Activated CD4-positive, alpha-beta T cell treated with anti-CD3 and anti-CD28 coated beads for 36 hours (primary cell): ENCODE measurements at regions of chr2 and their contacts with region 1.

Region 1: DNA sequence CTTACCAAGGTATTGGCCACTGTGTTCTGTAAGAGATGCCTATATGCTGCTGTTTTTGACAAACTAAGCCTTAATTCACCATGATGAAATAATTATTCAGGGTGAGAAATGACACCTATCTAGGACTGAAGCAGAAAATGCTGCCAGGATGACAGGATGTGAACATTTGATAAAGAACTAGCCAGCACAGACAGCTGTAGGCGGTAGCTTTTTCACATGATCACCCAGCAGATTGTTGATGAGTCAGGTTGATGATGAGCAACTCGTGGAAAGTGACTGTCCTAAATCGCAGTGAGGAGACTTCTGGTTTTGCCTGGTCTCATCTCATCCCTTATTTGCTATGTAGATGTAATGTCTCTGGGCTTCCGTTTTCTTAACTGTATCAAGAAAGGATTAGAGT is 144.1 kb downstream of the PRPF40A start:
- DNase-seq: peak; percentile 73
- ATAC-seq: peak; percentile 97
- H3K4me3 Mint-ChIP-seq: no peak overlapping the region
- H3K27ac Mint-ChIP-seq: peak overlapping the region; percentile 52
- H3K4me1 Mint-ChIP-seq: peaks cover 8% of the 10 kb centered on the region
- H3K27me3 Mint-ChIP-seq: peaks cover 2% of the 10 kb centered on the region

Region 2: GRCh38 chr2:152407204-152407721 is 165.9 kb before region 1 on chr2:
- CTCF ChIA-PET with region 1: no interaction called
- POLR2A ChIA-PET with region 1: no interaction called
- intact Hi-C with region 1: loop called in 1 of 2 experiments (anchors 5 kb)
- DNase-seq: peak; percentile 59
- ATAC-seq: peak; percentile 80
- H3K4me3 Mint-ChIP-seq: peak overlapping the region; percentile 24
- H3K27ac Mint-ChIP-seq: peak overlapping the region; percentile 67
- H3K4me1 Mint-ChIP-seq: peaks cover 29% of the 10 kb centered on the region
- H3K27me3 Mint-ChIP-seq: peaks cover 17% of the 10 kb centered on the region

Region 3: GRCh38 chr2:152415231-152415642 is 157.9 kb before region 1 on chr2:
- CTCF ChIA-PET with region 1: no interaction called
- POLR2A ChIA-PET with region 1: interaction called, 3 read pairs
- intact Hi-C with region 1: loop called (anchors 1 kb)
- DNase-seq: peak; percentile 70
- ATAC-seq: peak; percentile 97
- H3K4me3 Mint-ChIP-seq: no peak overlapping the region
- H3K27ac Mint-ChIP-seq: peak overlapping the region; percentile 52
- H3K4me1 Mint-ChIP-seq: peaks cover 31% of the 10 kb centered on the region
- H3K27me3 Mint-ChIP-seq: peaks cover 29% of the 10 kb centered on the region

Region 4: GRCh38 chr2:152587187-152587947 is 14.2 kb after region 1 on chr2:
- CTCF ChIA-PET with region 1: no interaction called
- POLR2A ChIA-PET with region 1: interaction called, 3 read pairs
- intact Hi-C with region 1: loop called in 1 of 2 experiments (anchors 1 kb)
- DNase-seq: no peak
- ATAC-seq: peak; percentile 63
- H3K4me3 Mint-ChIP-seq: no peak overlapping the region
- H3K27ac Mint-ChIP-seq: no peak overlapping the region
- H3K4me1 Mint-ChIP-seq: peaks cover 12% of the 10 kb centered on the region
- H3K27me3 Mint-ChIP-seq: peaks cover 14% of the 10 kb centered on the region

Region 5: GRCh38 chr2:152694161-152694661 is 121.0 kb after region 1 on chr2:
- CTCF ChIA-PET with region 1: no interaction called
- POLR2A ChIA-PET with region 1: no interaction called
- intact Hi-C with region 1: loop called in 1 of 2 experiments (anchors 5 kb)
- DNase-seq: peak; percentile 70
- ATAC-seq: peak; percentile 92
- H3K4me3 Mint-ChIP-seq: peak overlapping the region; percentile 66
- H3K27ac Mint-ChIP-seq: peak overlapping the region; percentile 68
- H3K4me1 Mint-ChIP-seq: peaks cover 37% of the 10 kb centered on the region
- H3K27me3 Mint-ChIP-seq: no peaks in the 10 kb centered on the region